IMR-90 (cell line): ENCODE measurements at regions of chr12 and their contacts with region 1.

Region 1: GRCh38 chr12:29782285-29782870 is 1.4 kb downstream of the TMTC1 start:
- DNase-seq: peak; percentile 71
- ATAC-seq: peak; percentile 4
- H3K4me3 ChIP-seq: peak overlapping the region; percentile 95
- H3K27ac ChIP-seq: peak overlapping the region; percentile 89
- H3K4me1 ChIP-seq: peaks cover 4% of the 10 kb centered on the region
- H3K27me3 ChIP-seq: peaks cover 3% of the 10 kb centered on the region; the same call in 1 of the 2 replicates
- CTCF ChIP-seq: no peak
- POLR2A ChIP-seq: no peak
- RAD21 ChIP-seq: 0 out of 2 replicates have a peak, but pooled peaks have one; percentile 3

Region 2: DNA sequence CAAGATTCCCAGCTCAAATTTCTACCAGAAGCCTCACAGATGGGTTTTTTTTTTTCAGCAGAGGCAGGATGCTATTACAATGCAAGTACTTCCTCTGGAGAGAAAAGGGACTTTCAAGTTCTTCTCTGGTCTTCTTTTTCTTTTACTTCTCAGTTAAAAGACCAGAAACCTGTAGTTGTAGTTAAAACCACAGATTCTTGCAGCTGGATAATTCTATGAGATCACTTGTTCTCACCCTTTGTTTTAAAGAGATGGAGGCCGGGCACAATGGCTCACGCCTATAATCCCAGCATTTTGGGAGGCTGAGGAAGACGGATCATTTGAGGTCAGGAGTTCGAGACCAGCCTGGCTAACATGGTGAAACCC is 237.3 kb before region 1 on chr12:
- CTCF ChIA-PET with region 1: no interaction called
- POLR2A ChIA-PET with region 1: no interaction called
- dilution Hi-C with region 1: no loop called
- in situ Hi-C with region 1: loop called (anchors 10 kb)
- intact Hi-C with region 1: loop called (anchors 2 kb)
- DNase-seq: no peak
- ATAC-seq: no peak
- H3K4me3 ChIP-seq: no peak overlapping the region
- H3K27ac ChIP-seq: no peak overlapping the region
- H3K4me1 ChIP-seq: peaks cover 16% of the 10 kb centered on the region
- H3K27me3 ChIP-seq: no peaks in the 10 kb centered on the region
- CTCF ChIP-seq: no peak
- POLR2A ChIP-seq: no peak
- RAD21 ChIP-seq: no peak

Region 3: DNA sequence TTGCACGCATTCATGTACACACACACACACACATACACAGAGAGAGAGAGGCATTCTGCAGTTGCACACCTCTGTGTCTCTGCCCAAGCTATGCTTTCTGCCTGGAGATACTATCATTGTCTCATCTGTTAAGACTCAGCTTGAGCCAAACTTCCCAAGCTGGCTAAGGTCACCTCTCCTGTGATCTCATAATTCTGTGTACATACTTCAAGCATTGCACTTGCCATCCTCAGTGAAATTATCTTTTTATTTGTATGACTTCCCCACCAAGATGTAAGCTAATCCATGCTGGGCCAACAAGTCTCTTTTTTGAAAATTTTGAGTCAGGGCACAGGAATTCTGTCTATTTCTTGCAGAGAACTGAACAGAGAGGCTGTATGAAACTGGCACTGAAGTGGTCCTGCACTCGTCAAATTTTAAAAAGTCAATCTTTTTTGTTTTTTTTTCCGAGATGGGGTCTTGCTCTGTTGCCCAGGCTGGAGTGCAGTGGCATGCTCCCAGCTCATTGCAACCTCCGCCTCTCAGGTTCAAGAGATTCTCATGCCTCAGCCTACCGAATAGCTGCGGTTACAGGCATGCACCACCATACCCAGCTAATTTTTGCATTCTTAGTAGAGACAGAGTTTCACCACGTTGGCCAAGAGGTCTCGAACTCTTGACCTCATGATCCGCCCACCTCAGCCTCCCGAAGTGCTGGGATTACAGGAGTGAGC is 42.9 kb before region 1 on chr12:
- CTCF ChIA-PET with region 1: interaction called, 3 read pairs
- POLR2A ChIA-PET with region 1: no interaction called
- dilution Hi-C with region 1: no loop called
- in situ Hi-C with region 1: no loop called
- intact Hi-C with region 1: loop called (anchors 1 kb)
- DNase-seq: peak; percentile 93
- ATAC-seq: peak; percentile 66
- H3K4me3 ChIP-seq: no peak overlapping the region
- H3K27ac ChIP-seq: peak overlapping the region; percentile 67
- H3K4me1 ChIP-seq: peaks cover 17% of the 10 kb centered on the region
- H3K27me3 ChIP-seq: no peaks in the 10 kb centered on the region
- CTCF ChIP-seq: no peak
- POLR2A ChIP-seq: no peak
- RAD21 ChIP-seq: no peak

Region 4: GRCh38 chr12:30286345-30286926 is 504.1 kb after region 1 on chr12:
- CTCF ChIA-PET with region 1: no interaction called
- POLR2A ChIA-PET with region 1: no interaction called
- dilution Hi-C with region 1: no loop called
- in situ Hi-C with region 1: no loop called
- intact Hi-C with region 1: loop called (anchors 2 kb)
- DNase-seq: peak; percentile 42
- ATAC-seq: peak; percentile 75
- H3K4me3 ChIP-seq: no peak overlapping the region
- H3K27ac ChIP-seq: no peak overlapping the region
- H3K4me1 ChIP-seq: no peaks in the 10 kb centered on the region
- H3K27me3 ChIP-seq: no peaks in the 10 kb centered on the region
- CTCF ChIP-seq: peak; percentile 62
- POLR2A ChIP-seq: no peak
- RAD21 ChIP-seq: peak; percentile 72

Region 5: GRCh38 chr12:30515351-30515750 is 733.0 kb after region 1 on chr12:
- CTCF ChIA-PET with region 1: no interaction called
- POLR2A ChIA-PET with region 1: no interaction called
- dilution Hi-C with region 1: no loop called
- in situ Hi-C with region 1: no loop called
- intact Hi-C with region 1: loop called (anchors 10 kb)
- DNase-seq: no peak
- ATAC-seq: no peak; the same call in 1 of the 2 replicates
- H3K4me3 ChIP-seq: no peak overlapping the region
- H3K27ac ChIP-seq: no peak overlapping the region
- H3K4me1 ChIP-seq: no peaks in the 10 kb centered on the region
- H3K27me3 ChIP-seq: no peaks in the 10 kb centered on the region
- CTCF ChIP-seq: 0 out of 2 replicates have a peak, but pooled peaks have one; percentile 19
- POLR2A ChIP-seq: no peak
- RAD21 ChIP-seq: no peak